Activated CD8-positive, alpha-beta memory T cell treated with anti-CD3 and anti-CD28 coated beads, Interleukin-2, amount 10 ng/mL, durations not matched to agents 7 days and 5 days (primary cell): ENCODE measurements at regions of chr9 and their contacts with region 1.

Region 1: DNA sequence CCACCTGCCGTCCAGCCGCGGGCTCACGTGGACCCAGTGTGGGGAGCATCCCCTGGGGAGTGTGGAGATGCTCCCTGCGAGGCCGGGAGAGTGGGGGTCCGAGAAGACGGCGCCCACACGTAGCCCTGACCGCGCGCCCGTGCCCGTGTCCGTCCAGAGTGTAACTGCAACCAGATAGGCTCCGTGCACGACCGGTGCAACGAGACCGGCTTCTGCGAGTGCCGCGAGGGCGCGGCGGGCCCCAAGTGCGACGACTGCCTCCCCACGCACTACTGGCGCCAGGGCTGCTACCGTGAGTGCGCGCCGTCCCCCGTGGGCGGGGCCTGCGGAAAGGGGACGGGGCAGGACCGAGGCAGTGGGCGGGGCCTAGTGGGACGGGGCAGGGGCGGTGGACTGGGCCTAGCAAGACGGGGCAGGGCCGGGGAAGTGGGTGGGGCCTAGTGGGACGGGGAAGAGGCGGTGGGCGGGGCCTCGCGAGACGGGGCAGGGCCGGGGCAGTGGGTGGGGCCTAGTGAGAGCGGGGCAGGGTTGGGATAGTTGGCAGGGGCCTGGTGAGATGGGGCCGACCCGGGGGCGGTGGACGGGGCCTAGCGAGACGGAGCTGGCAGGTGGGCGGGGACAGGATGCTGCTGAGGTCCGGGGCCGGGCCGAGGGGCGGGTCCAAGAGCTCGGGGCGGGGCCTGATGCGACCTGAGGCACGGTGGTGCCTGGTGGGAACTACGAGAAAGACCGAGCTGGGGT is 79.1 kb downstream of the NTNG2 start:
- DNase-seq: peak; percentile 100
- ATAC-seq: peak; percentile 95
- H3K4me3 Mint-ChIP-seq: peak overlapping the region; percentile 97
- H3K27ac Mint-ChIP-seq: peak overlapping the region; percentile 94
- H3K4me1 Mint-ChIP-seq: peaks cover 9% of the 10 kb centered on the region
- H3K27me3 Mint-ChIP-seq: peaks cover 21% of the 10 kb centered on the region

Region 2: DNA sequence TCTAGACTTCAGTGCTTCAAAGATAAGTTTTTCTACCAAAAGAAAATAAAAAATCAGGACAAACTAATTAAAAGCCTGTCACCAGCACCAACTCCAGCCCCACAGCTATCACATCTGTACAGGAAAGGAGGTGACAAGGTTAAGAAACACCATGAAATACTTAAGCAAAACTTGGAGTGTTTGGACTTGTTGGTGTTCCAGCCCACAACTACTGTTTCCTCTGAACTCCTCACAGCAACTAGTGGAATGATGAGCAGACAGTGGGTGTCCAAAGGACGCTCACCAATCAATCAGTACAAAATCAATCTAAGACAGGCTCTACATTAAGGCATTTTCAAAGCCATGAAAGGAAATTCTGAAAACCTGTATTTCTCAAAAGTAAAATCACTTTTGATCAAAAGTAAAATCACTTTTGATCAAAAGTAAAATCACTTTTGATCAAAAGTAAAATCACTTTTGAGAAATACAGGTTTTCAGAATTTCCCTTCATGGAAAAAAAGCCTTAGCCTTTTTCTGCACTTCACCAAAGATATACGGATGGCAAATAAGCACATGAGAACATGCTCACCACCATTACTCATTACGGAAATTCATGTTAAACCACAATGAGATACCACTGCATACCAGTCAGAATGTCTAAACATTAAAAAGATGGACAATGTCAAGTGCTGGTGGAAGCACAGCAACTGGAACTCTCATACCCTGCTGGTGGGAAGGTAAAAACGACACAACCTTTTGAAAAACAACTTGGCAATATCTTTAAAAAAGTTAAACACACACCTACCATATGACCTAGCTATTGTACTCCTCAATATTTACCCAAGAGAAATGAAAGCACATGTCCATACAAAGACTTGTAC is 241.0 kb before region 1 on chr9:
- CTCF ChIA-PET with region 1: no interaction called
- DNase-seq: no peak
- ATAC-seq: peak; percentile 82
- H3K4me3 Mint-ChIP-seq: no peak overlapping the region
- H3K27ac Mint-ChIP-seq: peak overlapping the region; percentile 25
- H3K4me1 Mint-ChIP-seq: peaks cover 54% of the 10 kb centered on the region
- H3K27me3 Mint-ChIP-seq: peaks cover 5% of the 10 kb centered on the region

Region 3: GRCh38 chr9:132079391-132080091 is 161.4 kb before region 1 on chr9 and contains the start of gene MED27:
- CTCF ChIA-PET with region 1: interaction called, 10 read pairs
- DNase-seq: peak; percentile 97
- ATAC-seq: peak; percentile 96
- H3K4me3 Mint-ChIP-seq: peak within 1 kb of the TSS; percentile 99
- H3K27ac Mint-ChIP-seq: peak within 1 kb of the TSS; percentile 83
- H3K4me1 Mint-ChIP-seq: peaks cover 38% of the 10 kb centered on the region
- H3K27me3 Mint-ChIP-seq: no peaks in the 10 kb centered on the region
- total RNA-seq, gene MED27: 25.7 to 28.2 TPM

Region 4: GRCh38 chr9:132169672-132170392 is 71.1 kb before region 1 on chr9:
- CTCF ChIA-PET with region 1: interaction called, 176 read pairs
- DNase-seq: peak; percentile 66
- ATAC-seq: peak; percentile 71
- H3K4me3 Mint-ChIP-seq: no peak overlapping the region
- H3K27ac Mint-ChIP-seq: no peak overlapping the region
- H3K4me1 Mint-ChIP-seq: no peaks in the 10 kb centered on the region
- H3K27me3 Mint-ChIP-seq: peaks cover 22% of the 10 kb centered on the region

Region 5: GRCh38 chr9:132260846-132261245 is 19.9 kb after region 1 on chr9:
- CTCF ChIA-PET with region 1: interaction called, 11 read pairs
- DNase-seq: no peak
- ATAC-seq: no peak
- H3K4me3 Mint-ChIP-seq: no peak overlapping the region
- H3K27ac Mint-ChIP-seq: no peak overlapping the region
- H3K4me1 Mint-ChIP-seq: peaks cover 7% of the 10 kb centered on the region
- H3K27me3 Mint-ChIP-seq: no peaks in the 10 kb centered on the region

Region 6: GRCh38 chr9:132390966-132391365 is 150.0 kb after region 1 on chr9:
- CTCF ChIA-PET with region 1: no interaction called
- DNase-seq: no peak
- ATAC-seq: no peak
- H3K4me3 Mint-ChIP-seq: no peak overlapping the region
- H3K27ac Mint-ChIP-seq: no peak overlapping the region
- H3K4me1 Mint-ChIP-seq: no peaks in the 10 kb centered on the region
- H3K27me3 Mint-ChIP-seq: no peaks in the 10 kb centered on the region